WTC11 (cell line): ENCODE measurements at regions of chr12 and their contacts with region 1.

Region 1: GRCh38 chr12:14365294-14366208 is at the start of gene ATF7IP:
- DNase-seq: peak; percentile 95
- ATAC-seq: peak; percentile 99
- H3K4me3 Mint-ChIP-seq: peak within 1 kb of the TSS; percentile 99
- H3K27ac Mint-ChIP-seq: peak within 1 kb of the TSS; percentile 99
- H3K4me1 Mint-ChIP-seq: peaks cover 26% of the 10 kb centered on the region
- H3K27me3 Mint-ChIP-seq: no peaks in the 10 kb centered on the region
- CTCF ChIP-seq: no peak
- total RNA-seq, gene ATF7IP: 141 to 169 TPM (median 167 TPM) in 3 replicates

Region 2: GRCh38 chr12:14239350-14239934 is 126.1 kb before region 1 on chr12:
- CTCF ChIA-PET with region 1: interaction called, 14 read pairs
- POLR2A ChIA-PET with region 1: interaction called, 13 read pairs
- DNase-seq: peak; percentile 34
- ATAC-seq: peak; percentile 80
- H3K4me3 Mint-ChIP-seq: peak overlapping the region; percentile 48
- H3K27ac Mint-ChIP-seq: peak overlapping the region; percentile 35
- H3K4me1 Mint-ChIP-seq: peaks cover 26% of the 10 kb centered on the region
- H3K27me3 Mint-ChIP-seq: no peaks in the 10 kb centered on the region
- CTCF ChIP-seq: no peak

Region 3: GRCh38 chr12:14264778-14265177 is 100.8 kb before region 1 on chr12:
- CTCF ChIA-PET with region 1: interaction called, 34 read pairs
- POLR2A ChIA-PET with region 1: interaction called, 103 read pairs
- DNase-seq: no peak
- ATAC-seq: no peak
- H3K4me3 Mint-ChIP-seq: no peak overlapping the region
- H3K27ac Mint-ChIP-seq: no peak overlapping the region
- H3K4me1 Mint-ChIP-seq: peaks cover 53% of the 10 kb centered on the region
- H3K27me3 Mint-ChIP-seq: peaks cover 4% of the 10 kb centered on the region; the same call in 1 of the 2 replicates
- CTCF ChIP-seq: no peak

Region 4: DNA sequence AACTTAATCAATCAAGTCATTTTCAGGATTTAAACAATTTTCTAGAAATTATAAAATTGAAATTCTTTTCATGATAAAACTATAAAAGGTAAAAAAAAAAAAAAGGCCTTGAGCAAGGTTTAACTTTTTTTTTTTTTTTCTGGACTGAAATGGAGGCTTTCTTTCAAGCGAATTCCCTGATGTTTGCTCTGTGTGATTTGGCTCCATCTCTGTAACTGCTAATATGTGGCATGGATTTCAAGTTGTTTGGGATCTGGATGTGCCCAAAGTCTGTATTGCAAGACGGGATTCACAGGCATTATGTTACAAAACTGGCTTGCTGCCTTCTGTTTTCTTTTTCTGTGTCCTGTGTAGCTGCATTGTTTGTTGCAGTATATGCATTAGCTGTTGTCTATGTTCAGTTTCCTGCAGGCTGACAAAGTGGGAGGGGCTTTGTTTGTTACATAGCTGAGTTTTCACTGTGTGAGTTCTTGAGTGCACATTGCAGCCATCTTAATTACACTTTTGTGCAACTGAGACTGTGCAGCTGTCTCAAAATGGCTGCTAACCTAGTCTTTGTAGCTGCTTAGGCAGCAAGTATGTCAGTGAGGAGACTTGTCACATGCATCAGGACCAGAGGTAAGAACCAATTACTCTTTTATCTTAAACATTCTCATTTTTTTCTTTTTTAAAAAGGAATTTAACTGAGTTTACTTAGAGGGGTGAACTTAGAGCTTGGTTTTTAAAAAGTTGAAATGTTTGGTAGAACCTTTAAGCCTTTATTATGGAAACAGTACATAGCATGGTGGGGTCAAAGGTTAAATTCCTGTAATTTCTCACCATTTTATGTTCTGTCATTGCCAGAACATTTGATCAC is 19.5 kb after region 1 on chr12:
- CTCF ChIA-PET with region 1: interaction called, 5 read pairs
- POLR2A ChIA-PET with region 1: interaction called, 14 read pairs
- DNase-seq: peak; percentile 28
- ATAC-seq: peak; percentile 83
- H3K4me3 Mint-ChIP-seq: peak overlapping the region; percentile 50
- H3K27ac Mint-ChIP-seq: peak overlapping the region; percentile 97
- H3K4me1 Mint-ChIP-seq: peaks cover 76% of the 10 kb centered on the region
- H3K27me3 Mint-ChIP-seq: no peaks in the 10 kb centered on the region
- CTCF ChIP-seq: no peak

Region 5: DNA sequence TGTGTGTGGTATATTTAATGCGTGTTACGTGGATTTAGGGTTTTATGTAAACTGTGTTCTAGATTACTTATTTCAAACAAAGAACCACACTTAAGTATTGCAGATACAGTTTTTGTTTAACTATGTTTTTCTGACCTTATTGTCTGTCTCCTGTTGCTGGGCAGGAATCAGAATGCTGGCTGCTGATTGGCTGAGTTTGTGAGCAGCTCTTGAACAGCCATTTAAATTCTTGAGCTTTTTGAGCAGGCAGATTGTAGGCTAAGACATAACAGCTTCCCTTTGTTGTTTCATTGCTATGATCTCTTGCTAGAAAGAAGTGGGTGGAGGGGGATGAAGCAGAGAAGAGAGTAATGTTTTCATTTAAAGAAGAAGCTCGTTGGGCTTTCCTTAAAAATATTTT is 52.2 kb after region 1 on chr12:
- CTCF ChIA-PET with region 1: interaction called, 10 read pairs
- POLR2A ChIA-PET with region 1: interaction called, 8 read pairs
- DNase-seq: peak; percentile 77
- ATAC-seq: peak; percentile 81
- H3K4me3 Mint-ChIP-seq: peak overlapping the region; percentile 61
- H3K27ac Mint-ChIP-seq: peak overlapping the region; percentile 99
- H3K4me1 Mint-ChIP-seq: peaks cover 77% of the 10 kb centered on the region
- H3K27me3 Mint-ChIP-seq: no peaks in the 10 kb centered on the region
- CTCF ChIP-seq: no peak